ENCODE measurements at regions of chr2 and their contacts with region 1.

Region 1: DNA sequence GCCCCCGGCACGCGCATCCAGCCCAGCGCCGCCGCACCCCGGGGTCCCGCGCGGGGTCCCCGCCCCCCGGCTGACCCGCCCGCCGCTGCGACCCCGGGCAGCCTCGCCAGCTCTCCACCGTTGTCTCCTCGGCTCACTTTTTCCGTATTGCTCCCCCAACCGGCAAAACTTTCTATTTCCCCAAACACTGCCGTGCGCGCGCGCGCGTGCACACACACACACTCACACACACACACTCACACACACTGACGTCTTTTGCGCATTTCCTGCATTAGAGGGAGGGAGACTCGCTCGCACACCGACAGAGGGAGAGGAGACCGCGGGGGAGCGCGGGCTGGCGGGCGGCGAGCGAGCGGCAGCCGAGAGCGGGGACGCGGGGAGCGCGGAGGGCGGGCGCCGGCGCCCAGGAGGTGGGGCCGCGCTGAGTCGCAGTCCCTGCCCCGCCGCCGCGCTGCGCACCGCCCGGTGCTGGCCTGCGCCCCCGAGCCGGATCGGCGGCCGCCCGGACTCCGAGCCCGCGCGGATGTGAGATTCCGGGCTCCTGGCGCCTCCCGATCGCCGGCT is 542 bp upstream of the PRKCE start:
- DNase-seq: peak; percentile 95
- H3K4me3 ChIP-seq: peak overlapping the region; percentile 60 to 95 (median 70)
- H3K27ac ChIP-seq: peak overlapping the region; percentile 57
- H3K4me1 ChIP-seq: peaks cover 17% of the 10 kb centered on the region
- H3K27me3 ChIP-seq: no peaks in the 10 kb centered on the region
- CTCF ChIP-seq: peak; percentile 26 to 58

Region 2: DNA sequence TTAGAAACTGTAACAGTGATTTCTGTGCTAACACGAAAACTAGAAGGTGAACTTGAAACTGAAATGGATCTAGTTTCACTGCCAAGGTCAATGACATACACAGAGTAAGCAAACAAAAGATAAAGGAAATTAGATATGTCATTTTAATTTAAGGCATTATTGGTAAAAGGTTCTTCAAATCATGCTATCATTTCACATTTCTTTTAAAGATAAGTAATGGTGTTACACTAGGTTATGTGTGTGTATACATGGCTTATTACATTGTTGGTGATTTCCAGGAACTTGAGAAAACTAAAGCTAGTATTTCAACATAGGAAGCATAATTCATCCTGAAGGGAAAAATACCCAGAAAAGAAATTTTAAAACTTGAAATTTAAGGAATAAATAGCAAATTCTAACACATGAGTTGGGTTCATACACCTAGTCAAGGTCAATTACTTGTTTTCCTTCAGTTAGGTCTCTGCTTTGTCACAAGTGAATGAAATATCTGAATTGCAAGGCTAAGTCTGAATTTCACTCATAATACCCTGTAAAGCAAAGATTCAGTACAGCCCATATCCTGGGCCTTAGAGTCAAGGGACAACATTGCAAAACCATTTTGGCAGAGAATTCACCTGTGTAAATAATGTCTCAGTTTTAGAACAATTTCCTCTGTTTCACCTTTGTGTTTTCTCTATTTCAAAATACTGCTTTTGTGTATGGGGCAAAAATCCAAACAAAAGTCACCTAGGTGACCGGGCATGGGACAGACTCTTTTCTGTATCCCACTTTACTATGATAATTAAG is 181.4 kb before region 1 on chr2:
- CTCF ChIA-PET with region 1: no interaction called
- dilution Hi-C with region 1: no loop called
- in situ Hi-C with region 1: no loop called
- intact Hi-C with region 1: no loop called
- DNase-seq: peak; percentile 11
- H3K4me3 ChIP-seq: no peak overlapping the region
- H3K27ac ChIP-seq: no peak overlapping the region
- H3K4me1 ChIP-seq: no peaks in the 10 kb centered on the region
- H3K27me3 ChIP-seq: no peaks in the 10 kb centered on the region
- CTCF ChIP-seq: no peak

Region 3: GRCh38 chr2:45595721-45596435 is 55.1 kb before region 1 on chr2:
- CTCF ChIA-PET with region 1: no interaction called
- dilution Hi-C with region 1: no loop called
- in situ Hi-C with region 1: no loop called
- intact Hi-C with region 1: no loop called
- DNase-seq: peak; percentile 42
- H3K4me3 ChIP-seq: no peak overlapping the region
- H3K27ac ChIP-seq: peak overlapping the region; percentile 50
- H3K4me1 ChIP-seq: peaks cover 13% of the 10 kb centered on the region
- H3K27me3 ChIP-seq: no peaks in the 10 kb centered on the region
- CTCF ChIP-seq: no peak

Region 4: GRCh38 chr2:45664635-45665261 is 13.8 kb after region 1 on chr2:
- CTCF ChIA-PET with region 1: interaction called, 11 read pairs
- dilution Hi-C with region 1: no loop called
- in situ Hi-C with region 1: no loop called
- intact Hi-C with region 1: no loop called
- DNase-seq: no peak
- H3K4me3 ChIP-seq: no peak overlapping the region
- H3K27ac ChIP-seq: no peak overlapping the region
- H3K4me1 ChIP-seq: no peaks in the 10 kb centered on the region
- H3K27me3 ChIP-seq: no peaks in the 10 kb centered on the region
- CTCF ChIP-seq: no peak

Region 5: DNA sequence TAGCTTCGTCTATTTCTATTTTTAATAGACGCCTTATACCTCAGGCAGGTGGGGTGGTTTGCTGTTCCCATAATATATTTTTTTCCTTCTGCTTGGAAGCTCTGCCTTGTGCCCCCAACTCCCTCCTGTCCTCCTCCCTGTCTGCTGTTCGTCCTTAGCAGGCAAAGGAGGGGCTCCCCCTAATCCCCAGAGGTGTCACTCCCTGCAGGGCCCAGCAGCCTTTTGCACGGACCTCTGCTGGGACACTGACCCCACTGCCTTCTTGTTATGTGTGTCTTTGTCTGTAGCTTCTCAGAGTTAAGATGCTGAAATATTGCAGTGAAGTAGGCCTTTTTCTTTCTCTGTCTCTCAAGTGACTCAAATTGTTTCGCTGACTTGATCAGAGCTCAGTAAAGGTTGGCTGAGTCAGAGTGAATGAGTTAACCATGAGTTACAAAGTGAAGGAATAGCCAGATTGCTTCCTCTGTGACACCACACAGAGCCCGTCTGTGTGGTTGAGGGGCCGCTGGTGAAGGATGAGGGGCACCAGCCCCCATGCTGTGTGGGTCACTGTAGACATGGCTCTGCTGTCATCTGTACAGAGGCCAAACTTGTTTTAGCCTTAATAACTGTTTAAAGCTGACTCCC is 48.2 kb after region 1 on chr2:
- CTCF ChIA-PET with region 1: no interaction called
- dilution Hi-C with region 1: no loop called
- in situ Hi-C with region 1: no loop called
- intact Hi-C with region 1: loop called (anchors 5 kb)
- DNase-seq: peak; percentile 59
- H3K4me3 ChIP-seq: no peak overlapping the region
- H3K27ac ChIP-seq: no peak overlapping the region
- H3K4me1 ChIP-seq: peaks cover 3% of the 10 kb centered on the region
- H3K27me3 ChIP-seq: no peaks in the 10 kb centered on the region
- CTCF ChIP-seq: no peak

Region 6: DNA sequence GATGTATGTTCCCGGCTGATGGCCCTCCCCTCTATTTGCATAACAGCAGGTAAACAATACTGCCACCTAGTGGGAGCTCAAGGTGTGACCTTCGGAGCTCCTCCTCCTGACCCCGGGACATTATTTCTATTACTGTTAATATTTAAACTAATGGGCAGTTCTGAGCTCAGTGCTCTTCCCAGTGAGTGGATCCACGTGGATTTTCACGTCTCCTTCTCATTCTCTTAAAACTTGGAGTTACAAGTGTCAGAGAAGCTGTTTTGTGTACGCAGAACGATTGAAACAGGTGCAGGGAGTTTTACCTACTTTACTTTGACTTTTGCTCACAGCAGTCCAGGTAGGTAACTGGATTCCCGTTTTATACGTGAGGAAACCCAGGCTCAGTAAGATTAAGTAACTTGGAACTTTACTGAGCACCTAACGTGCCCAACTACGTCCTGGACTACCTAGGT is 127.8 kb after region 1 on chr2:
- CTCF ChIA-PET with region 1: interaction called, 7 read pairs
- dilution Hi-C with region 1: no loop called
- in situ Hi-C with region 1: loop called (anchors 5 kb)
- intact Hi-C with region 1: loop called (anchors 1 kb)
- DNase-seq: peak; percentile 41
- H3K4me3 ChIP-seq: no peak overlapping the region
- H3K27ac ChIP-seq: no peak overlapping the region
- H3K4me1 ChIP-seq: no peaks in the 10 kb centered on the region
- H3K27me3 ChIP-seq: no peaks in the 10 kb centered on the region
- CTCF ChIP-seq: peak; percentile 79 to 82

Region 7: DNA sequence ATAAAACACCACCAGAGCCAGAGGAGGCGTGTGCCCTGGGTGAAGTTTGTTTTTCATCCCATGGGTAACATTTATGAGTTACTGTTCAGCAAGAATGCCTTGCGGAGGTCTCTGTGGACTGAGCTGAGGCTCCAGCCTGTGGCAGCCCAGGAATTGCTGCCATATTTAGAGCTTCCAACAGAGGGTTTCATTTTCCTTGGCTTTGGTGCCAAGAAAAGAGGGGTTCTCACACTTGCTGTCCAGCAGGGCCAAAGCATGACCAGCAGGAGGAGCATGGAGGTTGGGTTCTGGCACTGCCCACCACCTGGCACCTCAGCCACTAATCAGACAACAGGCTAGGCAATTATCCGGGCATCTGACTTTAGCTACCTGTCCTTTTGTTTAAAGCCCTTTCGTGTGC is 683.0 kb after region 1 on chr2:
- CTCF ChIA-PET with region 1: interaction called, 16 read pairs
- dilution Hi-C with region 1: no loop called
- in situ Hi-C with region 1: no loop called
- intact Hi-C with region 1: no loop called
- DNase-seq: no peak
- H3K4me3 ChIP-seq: no peak overlapping the region
- H3K27ac ChIP-seq: peak overlapping the region; percentile 93
- H3K4me1 ChIP-seq: peaks cover 90% of the 10 kb centered on the region
- H3K27me3 ChIP-seq: no peaks in the 10 kb centered on the region
- CTCF ChIP-seq: peak; percentile 3 to 22

Measured in mammary epithelial cell (primary cell).